Activated B cell treated with CpG ODN at 0.5 μM for 24 hours (primary cell): ENCODE measurements at regions of chr2 and their contacts with region 1.

Region 1: GRCh38 chr2:195559431-195559914 is 97.6 kb upstream of the SLC39A10 start:
- DNase-seq: no peak
- ATAC-seq: peak; percentile 70
- H3K4me3 Mint-ChIP-seq: peak overlapping the region; percentile 32
- H3K27ac Mint-ChIP-seq: peak overlapping the region; percentile 98
- H3K4me1 Mint-ChIP-seq: peaks cover 62% of the 10 kb centered on the region
- H3K27me3 Mint-ChIP-seq: no peaks in the 10 kb centered on the region
- CTCF ChIP-seq: no peak

Region 2: GRCh38 chr2:195505701-195506100 is 53.8 kb before region 1 on chr2:
- CTCF ChIA-PET with region 1: interaction called, 3 read pairs
- POLR2A ChIA-PET with region 1: interaction called, 13 read pairs
- intact Hi-C with region 1: no loop called
- DNase-seq: no peak
- ATAC-seq: no peak
- H3K4me3 Mint-ChIP-seq: no peak overlapping the region
- H3K27ac Mint-ChIP-seq: no peak overlapping the region
- H3K4me1 Mint-ChIP-seq: peaks cover 8% of the 10 kb centered on the region
- H3K27me3 Mint-ChIP-seq: no peaks in the 10 kb centered on the region
- CTCF ChIP-seq: no peak

Region 3: DNA sequence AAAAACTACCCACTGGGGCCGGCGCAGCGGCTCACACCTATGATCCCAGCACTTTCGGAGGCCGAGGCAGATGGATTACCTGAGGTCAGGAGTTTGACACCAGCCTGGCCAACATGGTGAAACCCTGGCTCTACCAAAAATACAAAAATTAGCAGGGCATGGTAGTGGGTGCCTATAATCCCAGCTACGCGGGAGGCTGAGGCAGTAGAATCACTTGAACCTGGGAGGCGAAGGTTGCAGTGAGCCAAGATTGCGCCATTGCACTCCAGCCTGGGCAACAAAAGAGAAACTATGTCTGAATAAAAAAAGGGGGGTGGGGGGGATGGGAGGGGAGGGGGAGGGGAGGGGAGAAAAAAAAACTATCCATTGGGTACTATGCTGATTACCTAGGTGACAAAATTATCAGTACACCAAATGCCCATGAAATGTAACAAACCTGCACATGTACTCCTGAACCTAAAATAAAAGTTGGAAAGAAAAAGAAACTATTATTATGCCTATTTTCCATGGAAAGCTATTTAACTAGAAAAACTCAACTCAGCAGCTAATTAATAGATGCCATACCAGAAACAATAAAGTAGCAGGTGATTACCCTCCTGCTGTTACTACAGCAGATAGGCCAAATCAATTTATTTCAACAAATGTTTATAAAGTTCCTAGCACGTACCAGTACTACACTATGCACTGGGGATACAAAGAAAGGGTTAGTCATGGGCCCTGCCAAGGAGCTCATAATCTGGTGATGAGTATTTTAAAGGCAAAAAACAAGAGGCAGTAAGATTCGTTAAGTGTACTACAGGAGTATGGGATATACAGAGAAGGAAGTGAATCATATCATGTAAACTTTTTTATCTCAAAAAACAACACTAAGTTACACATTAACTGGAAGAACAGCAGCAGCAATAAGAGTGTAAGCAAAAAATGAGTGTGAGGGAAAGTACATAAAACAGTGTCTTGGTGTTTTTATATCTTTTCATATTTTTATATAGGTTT is 15.3 kb before region 1 on chr2:
- CTCF ChIA-PET with region 1: no interaction called
- POLR2A ChIA-PET with region 1: interaction called, 126 read pairs
- intact Hi-C with region 1: loop called (anchors 1 kb)
- DNase-seq: no peak
- ATAC-seq: peak; percentile 31
- H3K4me3 Mint-ChIP-seq: no peak overlapping the region
- H3K27ac Mint-ChIP-seq: no peak overlapping the region
- H3K4me1 Mint-ChIP-seq: peaks cover 16% of the 10 kb centered on the region
- H3K27me3 Mint-ChIP-seq: no peaks in the 10 kb centered on the region
- CTCF ChIP-seq: no peak

Region 4: GRCh38 chr2:195575879-195576401 is 16.5 kb after region 1 on chr2:
- CTCF ChIA-PET with region 1: interaction called, 7 read pairs
- POLR2A ChIA-PET with region 1: interaction called, 35 read pairs
- intact Hi-C with region 1: loop called (anchors 1 kb)
- DNase-seq: no peak
- ATAC-seq: peak; percentile 79
- H3K4me3 Mint-ChIP-seq: peak overlapping the region; percentile 70
- H3K27ac Mint-ChIP-seq: peak overlapping the region; percentile 76
- H3K4me1 Mint-ChIP-seq: peaks cover 50% of the 10 kb centered on the region
- H3K27me3 Mint-ChIP-seq: no peaks in the 10 kb centered on the region
- CTCF ChIP-seq: no peak

Region 5: GRCh38 chr2:195649629-195650190 is 90.2 kb after region 1 on chr2:
- CTCF ChIA-PET with region 1: interaction called, 4 read pairs
- POLR2A ChIA-PET with region 1: interaction called, 54 read pairs
- intact Hi-C with region 1: loop called (anchors 1 kb)
- DNase-seq: no peak
- ATAC-seq: peak; percentile 21
- H3K4me3 Mint-ChIP-seq: peak overlapping the region; percentile 76
- H3K27ac Mint-ChIP-seq: peak overlapping the region; percentile 99
- H3K4me1 Mint-ChIP-seq: peaks cover 76% of the 10 kb centered on the region
- H3K27me3 Mint-ChIP-seq: no peaks in the 10 kb centered on the region
- CTCF ChIP-seq: no peak

Region 6: DNA sequence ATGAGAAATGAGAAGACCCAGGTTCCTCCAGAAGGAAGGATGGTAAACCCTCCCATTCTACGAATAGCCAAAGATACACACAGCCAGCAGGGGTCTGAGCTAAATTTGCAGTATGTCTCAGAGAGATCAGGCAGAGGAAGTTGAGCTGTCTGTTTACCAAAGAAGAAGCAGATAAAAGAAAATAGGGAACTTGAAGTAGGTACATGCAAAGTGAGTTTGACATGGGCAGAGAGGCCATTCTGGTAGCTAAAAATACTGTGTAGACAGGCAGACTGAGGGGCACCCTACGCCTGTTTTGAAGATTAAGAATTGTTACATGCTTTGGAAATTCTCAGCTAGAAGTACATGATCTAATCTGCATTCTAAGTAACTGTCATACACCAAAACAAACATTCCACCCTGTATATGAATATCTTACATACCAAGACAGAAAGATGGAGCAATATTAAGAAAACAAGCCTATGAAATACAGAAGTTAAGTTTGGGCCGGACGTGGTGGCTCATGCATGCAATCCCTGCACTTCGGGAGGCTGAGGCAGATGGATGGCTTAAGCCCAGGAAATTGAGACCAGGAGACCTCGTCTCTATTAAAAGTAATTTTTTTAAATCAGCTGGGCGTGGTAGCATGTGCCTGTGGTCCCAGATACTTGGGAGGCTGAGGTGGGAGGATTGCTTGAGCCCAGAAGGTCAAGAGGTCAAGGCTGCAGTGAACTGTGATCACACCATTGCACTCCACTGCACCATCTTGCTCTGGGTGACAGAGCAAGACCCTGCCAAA is 1593.2 kb after region 1 on chr2:
- CTCF ChIA-PET with region 1: no interaction called
- POLR2A ChIA-PET with region 1: interaction called, 13 read pairs
- intact Hi-C with region 1: no loop called
- DNase-seq: no peak
- ATAC-seq: peak; percentile 84
- H3K4me3 Mint-ChIP-seq: peak overlapping the region; percentile 79
- H3K27ac Mint-ChIP-seq: peak overlapping the region; percentile 97
- H3K4me1 Mint-ChIP-seq: peaks cover 97% of the 10 kb centered on the region
- H3K27me3 Mint-ChIP-seq: no peaks in the 10 kb centered on the region
- CTCF ChIP-seq: no peak